T-cell (primary cell): ENCODE measurements at regions of chrX and their contacts with region 1.

Region 1: GRCh38 chrX:79182616-79183015 is 38.1 kb downstream of the GPR174 start:
- DNase-seq: no peak
- ATAC-seq: peak in 2 of 4 experiments; percentile 33 to 43
- H3K4me3 ChIP-seq: no peak overlapping the region
- H3K4me3 Mint-ChIP-seq: peak overlapping the region in 2 of 3 donors; percentile 8 to 37
- H3K27ac ChIP-seq: peak overlapping the region; percentile 60
- H3K27ac Mint-ChIP-seq: peak overlapping the region; percentile 75 to 80
- H3K4me1 ChIP-seq: peaks cover 3 to 13% of the 10 kb centered on the region in 2 experiments
- H3K4me1 Mint-ChIP-seq: peaks cover 28 to 68% (median 48%) of the 10 kb centered on the region in 3 donors
- H3K27me3 ChIP-seq: no peaks in the 10 kb centered on the region
- H3K27me3 Mint-ChIP-seq: peaks cover 0 to 4% of the 10 kb centered on the region in 2 donors

Region 2: DNA sequence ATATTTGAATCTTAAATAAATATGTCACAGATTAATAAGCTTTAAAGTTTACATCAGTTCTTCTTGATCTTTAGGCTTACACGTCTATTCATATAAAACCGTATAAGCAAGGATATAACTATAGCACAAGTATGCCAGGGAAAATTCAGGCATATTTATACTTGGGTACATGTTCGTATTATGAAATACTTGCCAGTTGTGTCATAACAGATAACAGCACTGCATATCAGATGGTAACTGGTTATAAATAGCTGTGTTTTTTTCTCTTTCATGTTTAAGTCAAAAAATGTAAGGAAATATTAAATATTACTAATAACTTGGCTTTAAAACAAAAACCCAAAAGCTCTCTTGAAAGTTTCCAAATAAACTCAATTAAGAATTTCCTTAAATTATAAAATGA is 1609.6 kb after region 1 on chrX:
- CTCF ChIA-PET with region 1: no interaction called
- POLR2A ChIA-PET with region 1: interaction called in 1 of 2 experiments, 10 read pairs
- DNase-seq: no peak
- ATAC-seq: no peak
- H3K4me3 ChIP-seq: no peak overlapping the region
- H3K4me3 Mint-ChIP-seq: no peak overlapping the region
- H3K27ac ChIP-seq: no peak overlapping the region
- H3K27ac Mint-ChIP-seq: no peak overlapping the region
- H3K4me1 ChIP-seq: no peaks in the 10 kb centered on the region
- H3K4me1 Mint-ChIP-seq: peaks cover 0 to 2% (median 0%) of the 10 kb centered on the region in 3 donors
- H3K27me3 ChIP-seq: no peaks in the 10 kb centered on the region
- H3K27me3 Mint-ChIP-seq: peaks cover 0 to 3% of the 10 kb centered on the region in 2 donors